ENCODE measurements at regions of chr6 and their contacts with region 1.

Region 1: GRCh38 chr6:139124887-139125672 is 9.8 kb upstream of the HECA start:
- DNase-seq: peak; percentile 87
- H3K4me3 Mint-ChIP-seq: peak overlapping the region; percentile 49
- H3K27ac Mint-ChIP-seq: peak overlapping the region; percentile 95
- H3K4me1 Mint-ChIP-seq: peaks cover 41% of the 10 kb centered on the region
- H3K27me3 Mint-ChIP-seq: no peaks in the 10 kb centered on the region

Region 2: DNA sequence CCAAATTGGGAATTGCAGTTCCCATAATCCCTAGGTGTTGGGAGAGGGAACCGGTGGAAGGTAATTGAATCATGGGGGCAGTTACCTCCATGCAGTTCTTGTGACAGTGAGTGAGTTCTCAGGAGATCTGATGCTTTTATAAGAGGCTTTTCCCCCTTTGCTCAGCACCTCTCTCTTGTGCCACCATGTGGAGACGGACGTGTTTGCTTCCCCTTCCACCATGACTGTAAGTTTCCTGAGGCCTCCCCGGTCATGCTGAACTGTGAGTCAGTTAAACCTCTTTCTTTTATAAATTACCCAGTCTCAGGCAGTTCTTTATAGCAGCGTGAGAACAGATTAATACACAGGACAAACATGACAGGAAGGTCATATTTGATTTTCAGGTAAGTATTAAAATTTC is 15.5 kb before region 1 on chr6:
- CTCF ChIA-PET with region 1: interaction called, 22 read pairs
- POLR2A ChIA-PET with region 1: interaction called, 23 read pairs
- DNase-seq: peak; percentile 38
- H3K4me3 Mint-ChIP-seq: no peak overlapping the region
- H3K27ac Mint-ChIP-seq: no peak overlapping the region
- H3K4me1 Mint-ChIP-seq: peaks cover 28% of the 10 kb centered on the region
- H3K27me3 Mint-ChIP-seq: no peaks in the 10 kb centered on the region

Region 3: GRCh38 chr6:139146317-139146726 is 21.2 kb after region 1 on chr6:
- CTCF ChIA-PET with region 1: interaction called, 11 read pairs
- POLR2A ChIA-PET with region 1: interaction called, 32 read pairs
- DNase-seq: no peak
- H3K4me3 Mint-ChIP-seq: peak overlapping the region; percentile 49
- H3K27ac Mint-ChIP-seq: peak overlapping the region; percentile 88
- H3K4me1 Mint-ChIP-seq: peaks cover 93% of the 10 kb centered on the region
- H3K27me3 Mint-ChIP-seq: no peaks in the 10 kb centered on the region

Region 4: GRCh38 chr6:139161817-139162284 is 36.8 kb after region 1 on chr6:
- CTCF ChIA-PET with region 1: interaction called, 6 read pairs
- POLR2A ChIA-PET with region 1: interaction called, 22 read pairs
- DNase-seq: peak; percentile 77
- H3K4me3 Mint-ChIP-seq: peak overlapping the region; percentile 38
- H3K27ac Mint-ChIP-seq: peak overlapping the region; percentile 94
- H3K4me1 Mint-ChIP-seq: peaks cover 74% of the 10 kb centered on the region
- H3K27me3 Mint-ChIP-seq: no peaks in the 10 kb centered on the region

Region 5: DNA sequence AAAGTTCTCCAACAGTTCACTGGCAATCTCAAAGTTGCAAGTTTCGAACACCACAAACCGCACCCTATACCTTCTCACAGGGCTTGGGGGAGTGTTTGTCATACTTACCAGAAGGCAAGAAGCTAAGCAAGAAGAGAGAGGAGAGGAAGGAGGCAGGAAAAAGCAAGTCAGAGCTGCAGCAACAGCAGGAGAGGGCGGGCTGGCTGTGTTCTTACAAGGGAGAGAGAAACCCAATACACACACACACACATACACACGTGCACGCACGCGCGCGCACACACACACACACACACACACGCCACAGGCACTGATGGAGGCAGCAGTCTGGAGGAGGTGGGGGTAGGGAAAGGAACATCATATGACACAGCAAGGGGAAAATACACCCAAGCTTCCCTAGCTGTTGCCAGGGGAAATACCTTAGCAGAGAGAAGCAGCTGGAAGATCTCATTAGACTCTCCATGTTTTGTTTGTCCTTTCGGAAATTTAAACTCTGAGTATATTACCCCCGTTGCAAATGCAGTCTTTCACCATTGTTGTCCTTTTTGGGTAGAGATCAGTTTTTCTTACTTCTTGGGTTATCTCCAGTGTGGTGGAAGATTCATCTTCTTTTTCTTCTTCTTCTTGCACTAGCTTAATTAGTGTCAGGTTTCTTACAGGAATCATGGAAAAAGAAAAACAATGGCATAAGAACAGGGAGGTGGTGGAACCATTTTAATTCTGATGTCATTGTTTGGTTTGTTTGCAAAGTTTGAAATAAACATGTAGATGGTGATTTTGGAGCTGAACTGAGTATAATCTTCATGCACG is 166.9 kb after region 1 on chr6 and contains the start of gene TXLNB:
- CTCF ChIA-PET with region 1: interaction called, 7 read pairs
- POLR2A ChIA-PET with region 1: interaction called, 32 read pairs
- DNase-seq: peak; percentile 89
- H3K4me3 Mint-ChIP-seq: peak within 1 kb of the TSS; percentile 74
- H3K27ac Mint-ChIP-seq: peak within 1 kb of the TSS; percentile 96
- H3K4me1 Mint-ChIP-seq: peaks cover 32% of the 10 kb centered on the region
- H3K27me3 Mint-ChIP-seq: no peaks in the 10 kb centered on the region
- total RNA-seq, gene TXLNB: 0.60 to 0.90 TPM